GM12878 (cell line): ENCODE measurements at regions of chr2 and their contacts with region 1.

Region 1: GRCh38 chr2:10434886-10435819 is 13.0 kb downstream of the ODC1 start:
- DNase-seq: no peak
- ATAC-seq: peak; percentile 86
- H3K4me3 ChIP-seq: no peak overlapping the region
- H3K27ac ChIP-seq: no peak overlapping the region
- H3K4me1 ChIP-seq: peaks cover 3% of the 10 kb centered on the region; the same call in 1 of the 2 replicates
- H3K27me3 ChIP-seq: no peaks in the 10 kb centered on the region
- CTCF ChIP-seq: peak; percentile 96 to 99 (median 98)
- EP300 ChIP-seq: no peak
- POLR2A ChIP-seq: no peak
- RAD21 ChIP-seq: peak; percentile 98

Region 2: GRCh38 chr2:9813312-9814133 is 621.6 kb before region 1 on chr2:
- CTCF ChIA-PET with region 1: interaction called, 10 read pairs
- POLR2A ChIA-PET with region 1: no interaction called
- RAD21 ChIA-PET with region 1: no interaction called
- SMC1A ChIA-PET with region 1: no interaction called
- in situ Hi-C with region 1: loop called (anchors 10 kb)
- intact Hi-C with region 1: loop called (anchors 10 kb)
- DNase-seq: no peak
- ATAC-seq: peak; percentile 98
- H3K4me3 ChIP-seq: no peak overlapping the region
- H3K27ac ChIP-seq: no peak overlapping the region
- H3K4me1 ChIP-seq: no peaks in the 10 kb centered on the region
- H3K27me3 ChIP-seq: no peaks in the 10 kb centered on the region; a peak in 2 of 4 replicates
- CTCF ChIP-seq: peak; percentile 95 to 96 (median 96)
- EP300 ChIP-seq: no peak
- POLR2A ChIP-seq: no peak
- RAD21 ChIP-seq: peak; percentile 85

Region 3: DNA sequence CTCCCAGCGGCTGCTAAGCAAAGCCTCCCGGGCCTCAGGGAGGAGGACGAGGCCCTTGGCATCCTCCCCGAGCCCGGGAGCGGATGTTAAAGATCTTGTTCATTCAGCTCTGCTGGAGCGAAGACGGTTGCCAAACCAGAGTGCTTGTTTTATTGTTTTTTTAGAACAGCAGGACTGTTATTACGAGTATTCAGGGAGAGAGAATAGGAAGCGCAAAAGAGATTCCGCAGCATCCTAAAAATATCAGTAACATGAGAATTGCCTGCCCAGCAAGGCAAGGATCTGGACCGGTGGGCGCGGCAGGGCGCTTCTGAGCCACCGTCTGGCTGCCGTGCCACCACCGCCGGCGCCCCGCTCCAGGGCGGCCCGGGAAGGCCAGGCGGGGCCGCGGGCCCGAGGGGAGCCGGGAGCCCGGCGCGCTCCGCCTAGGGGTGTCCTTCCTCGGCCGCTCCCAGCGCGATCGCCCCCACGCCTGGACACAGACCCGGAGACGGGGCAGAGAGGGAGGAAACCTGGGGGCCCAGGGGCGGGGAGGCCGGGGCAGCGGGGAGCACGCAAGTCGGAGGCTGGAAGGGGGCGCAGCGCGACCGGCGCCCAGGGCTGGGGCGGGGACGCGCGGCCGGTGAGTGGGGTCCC is 355.8 kb before region 1 on chr2:
- CTCF ChIA-PET with region 1: interaction called, 109 read pairs
- POLR2A ChIA-PET with region 1: interaction called, 4 read pairs
- RAD21 ChIA-PET with region 1: interaction called, 86 read pairs
- SMC1A ChIA-PET with region 1: interaction called, 38 read pairs
- in situ Hi-C with region 1: loop called (anchors 5 kb)
- intact Hi-C with region 1: no loop called
- DNase-seq: no peak
- ATAC-seq: peak; percentile 28
- H3K4me3 ChIP-seq: peak overlapping the region; percentile 57
- H3K27ac ChIP-seq: peak overlapping the region; percentile 40; the same call in 1 of the 2 replicates
- H3K4me1 ChIP-seq: peaks cover 50% of the 10 kb centered on the region
- H3K27me3 ChIP-seq: no peaks in the 10 kb centered on the region
- CTCF ChIP-seq: no peak
- EP300 ChIP-seq: no peak
- POLR2A ChIP-seq: no peak
- RAD21 ChIP-seq: no peak

Region 4: GRCh38 chr2:10122386-10123280 is 312.5 kb before region 1 on chr2 and contains the start of gene RRM2:
- CTCF ChIA-PET with region 1: interaction called, 151 read pairs
- POLR2A ChIA-PET with region 1: interaction called, 11 read pairs
- RAD21 ChIA-PET with region 1: interaction called, 170 read pairs
- SMC1A ChIA-PET with region 1: interaction called, 84 read pairs
- in situ Hi-C with region 1: no loop called
- intact Hi-C with region 1: loop called (anchors 1 kb)
- DNase-seq: peak; percentile 65
- ATAC-seq: peak; percentile 81
- H3K4me3 ChIP-seq: peak within 1 kb of the TSS; percentile 71
- H3K27ac ChIP-seq: peak within 1 kb of the TSS; percentile 98
- H3K4me1 ChIP-seq: peaks cover 5% of the 10 kb centered on the region
- H3K27me3 ChIP-seq: no peaks in the 10 kb centered on the region
- CTCF ChIP-seq: no peak
- EP300 ChIP-seq: no peak
- POLR2A ChIP-seq: peak; percentile 99
- RAD21 ChIP-seq: no peak
- polyA plus RNA-seq, gene RRM2: 54.4 to 64.5 TPM

Region 5: GRCh38 chr2:10267551-10268465 is 167.3 kb before region 1 on chr2:
- CTCF ChIA-PET with region 1: interaction called, 24 read pairs
- POLR2A ChIA-PET with region 1: no interaction called
- RAD21 ChIA-PET with region 1: interaction called, 19 read pairs
- SMC1A ChIA-PET with region 1: interaction called, 11 read pairs
- in situ Hi-C with region 1: no loop called
- intact Hi-C with region 1: loop called (anchors 1 kb)
- DNase-seq: no peak
- ATAC-seq: no peak
- H3K4me3 ChIP-seq: no peak overlapping the region
- H3K27ac ChIP-seq: no peak overlapping the region
- H3K4me1 ChIP-seq: no peaks in the 10 kb centered on the region
- H3K27me3 ChIP-seq: peaks cover 1 to 2% of the 10 kb centered on the region in 2 experiments; a peak in 1 of 4 replicates
- CTCF ChIP-seq: no peak
- EP300 ChIP-seq: no peak
- POLR2A ChIP-seq: no peak
- RAD21 ChIP-seq: no peak

Region 6: GRCh38 chr2:10424051-10424450 is 11.1 kb before region 1 on chr2:
- CTCF ChIA-PET with region 1: interaction called, 10 read pairs
- POLR2A ChIA-PET with region 1: interaction called, 3 read pairs
- RAD21 ChIA-PET with region 1: interaction called, 5 read pairs
- SMC1A ChIA-PET with region 1: interaction called, 6 read pairs
- in situ Hi-C with region 1: no loop called
- intact Hi-C with region 1: no loop called
- DNase-seq: no peak
- ATAC-seq: no peak
- H3K4me3 ChIP-seq: no peak overlapping the region
- H3K27ac ChIP-seq: no peak overlapping the region
- H3K4me1 ChIP-seq: no peaks in the 10 kb centered on the region
- H3K27me3 ChIP-seq: no peaks in the 10 kb centered on the region
- CTCF ChIP-seq: no peak
- EP300 ChIP-seq: no peak
- POLR2A ChIP-seq: no peak
- RAD21 ChIP-seq: no peak